HepG2 (cell line): ENCODE measurements at regions of chr1 and their contacts with region 1.

Region 1: DNA sequence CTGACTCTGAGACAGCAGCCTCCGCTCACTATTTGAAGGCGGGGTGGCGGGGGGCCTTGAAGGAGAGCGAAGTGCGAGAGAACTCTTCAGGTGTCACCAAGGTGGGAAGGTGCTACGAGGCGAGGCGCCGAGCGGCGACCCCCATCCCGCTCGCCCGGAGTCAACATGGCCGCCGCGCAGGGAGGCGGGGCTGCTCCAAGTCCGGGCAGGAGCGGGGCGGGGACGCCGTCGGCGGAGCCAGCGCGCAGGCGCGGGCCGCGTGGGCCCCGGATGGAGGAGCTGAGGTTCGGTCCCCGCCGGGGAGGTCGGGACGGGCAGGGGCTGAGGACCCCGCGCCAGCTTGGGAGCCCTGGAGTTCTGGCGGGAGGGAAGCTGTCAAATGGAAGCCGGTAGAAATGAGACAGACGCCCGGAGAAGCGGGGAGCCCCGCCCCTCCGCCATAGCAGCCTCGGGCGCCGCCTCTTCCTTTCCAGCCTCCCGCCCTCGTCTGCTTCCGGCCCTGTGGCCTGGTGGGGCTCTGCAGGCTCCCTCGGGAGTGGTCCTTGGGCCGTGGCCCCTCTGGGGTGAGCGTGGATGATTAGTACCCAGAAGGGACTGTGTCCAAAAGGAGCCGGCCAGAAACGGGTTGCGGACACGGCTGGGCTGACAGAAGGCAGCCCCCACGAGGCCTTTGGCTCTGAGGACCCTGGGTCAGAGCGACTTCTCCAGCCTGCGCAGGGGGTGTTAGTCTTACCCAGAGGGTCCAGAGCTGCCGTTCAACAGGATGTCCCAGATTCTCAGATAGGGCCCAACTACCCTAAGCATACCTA is at the start of gene PIGV:
- DNase-seq: peak; percentile 64
- ATAC-seq: peak; percentile 77
- H3K4me3 ChIP-seq: peak within 1 kb of the TSS; percentile 78 to 89 (median 87)
- H3K27ac ChIP-seq: peak within 1 kb of the TSS; percentile 97
- H3K4me1 ChIP-seq: peaks cover 63% of the 10 kb centered on the region
- H3K27me3 ChIP-seq: no peaks in the 10 kb centered on the region; a peak in 1 of 5 replicates
- CTCF ChIP-seq: peak; percentile 9; the same call in 1 of the 2 replicates
- EP300 ChIP-seq: no peak
- POLR2A ChIP-seq: peak; percentile 52 to 70; a peak in 3 of 4 replicates
- RAD21 ChIP-seq: peak; percentile 45
- total RNA-seq, gene PIGV: 7.9 and 13.5 TPM in 2 replicates

Region 2: DNA sequence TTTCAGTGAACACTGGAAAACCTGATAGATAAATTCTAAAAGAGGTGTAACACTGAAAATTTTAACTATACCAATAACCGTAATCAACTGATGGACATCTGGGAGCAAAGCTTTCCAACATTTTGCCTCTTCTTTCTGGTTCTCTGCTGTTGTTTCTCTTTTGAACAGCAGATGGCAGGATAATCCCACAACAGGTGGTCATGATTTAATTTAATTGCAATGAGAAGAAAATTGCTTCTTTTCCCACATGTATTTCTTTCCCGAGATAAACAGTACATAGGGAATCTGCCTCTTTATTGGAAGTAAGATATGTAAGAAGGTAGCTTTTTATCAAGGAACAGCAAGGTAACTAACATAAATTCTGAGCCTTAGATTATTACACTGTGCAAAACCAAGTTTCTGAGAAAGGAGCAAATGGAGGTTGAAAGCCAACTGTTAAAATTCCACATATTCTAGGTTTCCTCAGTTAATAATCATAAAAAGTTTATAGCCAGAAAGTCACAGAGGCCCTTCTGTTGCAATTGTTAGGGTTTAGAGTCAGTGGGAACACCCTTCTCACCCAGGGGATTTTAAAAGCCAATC is 185.4 kb before region 1 on chr1:
- CTCF ChIA-PET with region 1: interaction called, 44 read pairs
- POLR2A ChIA-PET with region 1: interaction called, 9 read pairs
- in situ Hi-C with region 1: loop called (anchors 5 kb)
- intact Hi-C with region 1: loop called (anchors 1 kb)
- DNase-seq: peak; percentile 52
- ATAC-seq: no peak
- H3K4me3 ChIP-seq: no peak overlapping the region
- H3K27ac ChIP-seq: no peak overlapping the region
- H3K4me1 ChIP-seq: 0 out of 2 replicates have a peak, but pooled peaks cover 7% of the 10 kb centered on the region
- H3K27me3 ChIP-seq: peaks cover 0 to 7% of the 10 kb centered on the region in 2 experiments; a peak in 2 of 5 replicates
- CTCF ChIP-seq: peak; percentile 82
- EP300 ChIP-seq: no peak
- POLR2A ChIP-seq: no peak
- RAD21 ChIP-seq: peak; percentile 85

Region 3: GRCh38 chr1:26677306-26678115 is 110.4 kb before region 1 on chr1:
- CTCF ChIA-PET with region 1: interaction called, 6 read pairs
- POLR2A ChIA-PET with region 1: interaction called, 4 read pairs
- in situ Hi-C with region 1: no loop called
- intact Hi-C with region 1: loop called (anchors 5 kb)
- DNase-seq: peak; percentile 61
- ATAC-seq: peak; percentile 99
- H3K4me3 ChIP-seq: 0 out of 6 replicates have a peak overlapping the region, but pooled peaks of 1 of the 3 experiments have one; percentile 11
- H3K27ac ChIP-seq: no peak overlapping the region
- H3K4me1 ChIP-seq: peaks cover 18% of the 10 kb centered on the region
- H3K27me3 ChIP-seq: no peaks in the 10 kb centered on the region
- CTCF ChIP-seq: peak; percentile 85
- EP300 ChIP-seq: no peak
- POLR2A ChIP-seq: no peak
- RAD21 ChIP-seq: peak; percentile 58

Region 4: GRCh38 chr1:26695356-26696118 is 92.4 kb before region 1 on chr1 and contains the start of gene ARID1A:
- CTCF ChIA-PET with region 1: no interaction called
- POLR2A ChIA-PET with region 1: interaction called, 127 read pairs
- in situ Hi-C with region 1: loop called (anchors 5 kb)
- intact Hi-C with region 1: loop called (anchors 5 kb)
- DNase-seq: peak; percentile 88
- ATAC-seq: peak; percentile 69
- H3K4me3 ChIP-seq: peak within 1 kb of the TSS; percentile 84 to 96 (median 91)
- H3K27ac ChIP-seq: peak within 1 kb of the TSS; percentile 98
- H3K4me1 ChIP-seq: peaks cover 60% of the 10 kb centered on the region
- H3K27me3 ChIP-seq: no peaks in the 10 kb centered on the region
- CTCF ChIP-seq: peak; percentile 44
- EP300 ChIP-seq: peak in 1 of 2 experiments; percentile 40; a peak in 1 of 4 replicates
- POLR2A ChIP-seq: peak; percentile 77 to 90
- RAD21 ChIP-seq: peak; percentile 84
- total RNA-seq, gene ARID1A: 11.9 and 18.4 TPM in 2 replicates

Region 5: GRCh38 chr1:26705788-26706311 is 82.1 kb before region 1 on chr1:
- CTCF ChIA-PET with region 1: no interaction called
- POLR2A ChIA-PET with region 1: interaction called, 80 read pairs
- in situ Hi-C with region 1: no loop called
- intact Hi-C with region 1: no loop called
- DNase-seq: peak; percentile 81
- ATAC-seq: peak; percentile 63
- H3K4me3 ChIP-seq: peak overlapping the region in 2 of 3 experiments; percentile 11 to 29; a peak in 2 of 6 replicates
- H3K27ac ChIP-seq: peak overlapping the region; percentile 72
- H3K4me1 ChIP-seq: peaks cover 71% of the 10 kb centered on the region
- H3K27me3 ChIP-seq: no peaks in the 10 kb centered on the region
- CTCF ChIP-seq: no peak
- EP300 ChIP-seq: 0 out of 4 replicates have a peak, but pooled peaks of 1 of the 2 experiments have one; percentile 25
- POLR2A ChIP-seq: no peak
- RAD21 ChIP-seq: no peak

Region 6: GRCh38 chr1:26761217-26761616 is 26.7 kb before region 1 on chr1:
- CTCF ChIA-PET with region 1: interaction called, 11 read pairs
- POLR2A ChIA-PET with region 1: interaction called, 13 read pairs
- in situ Hi-C with region 1: no loop called
- intact Hi-C with region 1: no loop called
- DNase-seq: no peak
- ATAC-seq: peak; percentile 64
- H3K4me3 ChIP-seq: no peak overlapping the region
- H3K27ac ChIP-seq: no peak overlapping the region
- H3K4me1 ChIP-seq: peaks cover 19% of the 10 kb centered on the region
- H3K27me3 ChIP-seq: no peaks in the 10 kb centered on the region
- CTCF ChIP-seq: no peak
- EP300 ChIP-seq: no peak
- POLR2A ChIP-seq: no peak
- RAD21 ChIP-seq: no peak

Region 7: GRCh38 chr1:26771643-26772321 is 16.1 kb before region 1 on chr1:
- CTCF ChIA-PET with region 1: interaction called, 4 read pairs
- POLR2A ChIA-PET with region 1: interaction called, 20 read pairs
- in situ Hi-C with region 1: no loop called
- intact Hi-C with region 1: no loop called
- DNase-seq: peak; percentile 77
- ATAC-seq: peak; percentile 84
- H3K4me3 ChIP-seq: no peak overlapping the region
- H3K27ac ChIP-seq: peak overlapping the region; percentile 19
- H3K4me1 ChIP-seq: peaks cover 18% of the 10 kb centered on the region
- H3K27me3 ChIP-seq: no peaks in the 10 kb centered on the region
- CTCF ChIP-seq: no peak
- EP300 ChIP-seq: peak in 1 of 2 experiments; percentile 27; a peak in 1 of 4 replicates
- POLR2A ChIP-seq: no peak
- RAD21 ChIP-seq: no peak